WTC11 (cell line): ENCODE measurements at regions of chr14 and their contacts with region 1.

Region 1: DNA sequence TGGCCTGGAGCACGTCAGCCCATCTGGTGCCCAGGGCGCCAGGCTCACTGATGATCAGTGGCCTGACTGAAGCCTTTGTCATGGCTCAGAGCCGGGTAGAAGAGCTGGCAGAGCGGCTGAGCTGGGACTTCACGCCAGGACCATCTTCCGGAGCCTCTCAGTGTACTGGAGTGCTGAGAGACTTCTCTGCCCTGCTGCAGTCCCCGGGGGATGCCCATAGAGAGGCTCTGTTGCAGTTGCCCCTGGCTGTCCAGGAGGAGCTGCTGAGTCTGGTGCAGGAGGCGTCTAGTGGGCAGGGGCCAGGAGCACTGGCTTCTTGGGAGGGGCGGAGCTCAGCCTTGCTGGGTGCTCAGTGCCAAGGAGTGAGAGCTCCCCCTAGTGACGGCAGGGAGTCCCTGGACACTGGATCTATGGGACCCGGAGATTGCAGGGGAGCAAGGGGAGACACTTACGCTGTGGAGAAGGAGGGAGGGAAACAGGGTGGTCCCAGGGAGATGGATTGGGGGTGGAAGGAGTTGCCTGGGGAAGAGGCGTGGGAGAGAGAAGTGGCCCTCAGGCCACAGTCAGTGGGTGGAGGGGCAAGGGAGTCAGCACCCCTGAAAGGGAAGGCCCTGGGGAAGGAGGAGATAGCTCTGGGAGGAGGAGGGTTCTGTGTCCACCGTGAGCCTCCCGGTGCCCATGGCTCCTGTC is 2.0 kb downstream of the KHNYN start:
- DNase-seq: peak; percentile 96
- ATAC-seq: peak; percentile 84
- H3K4me3 Mint-ChIP-seq: peak overlapping the region; percentile 74
- H3K27ac Mint-ChIP-seq: peak overlapping the region; percentile 48
- H3K4me1 Mint-ChIP-seq: peaks cover 29% of the 10 kb centered on the region
- H3K27me3 Mint-ChIP-seq: peaks cover 14% of the 10 kb centered on the region
- CTCF ChIP-seq: peak; percentile 89

Region 2: GRCh38 chr14:24129410-24129998 is 302.2 kb before region 1 on chr14:
- CTCF ChIA-PET with region 1: no interaction called
- POLR2A ChIA-PET with region 1: no interaction called
- DNase-seq: no peak
- ATAC-seq: no peak
- H3K4me3 Mint-ChIP-seq: no peak overlapping the region
- H3K27ac Mint-ChIP-seq: no peak overlapping the region
- H3K4me1 Mint-ChIP-seq: peaks cover 4% of the 10 kb centered on the region
- H3K27me3 Mint-ChIP-seq: no peaks in the 10 kb centered on the region; the same call in 1 of the 2 replicates
- CTCF ChIP-seq: no peak

Region 3: DNA sequence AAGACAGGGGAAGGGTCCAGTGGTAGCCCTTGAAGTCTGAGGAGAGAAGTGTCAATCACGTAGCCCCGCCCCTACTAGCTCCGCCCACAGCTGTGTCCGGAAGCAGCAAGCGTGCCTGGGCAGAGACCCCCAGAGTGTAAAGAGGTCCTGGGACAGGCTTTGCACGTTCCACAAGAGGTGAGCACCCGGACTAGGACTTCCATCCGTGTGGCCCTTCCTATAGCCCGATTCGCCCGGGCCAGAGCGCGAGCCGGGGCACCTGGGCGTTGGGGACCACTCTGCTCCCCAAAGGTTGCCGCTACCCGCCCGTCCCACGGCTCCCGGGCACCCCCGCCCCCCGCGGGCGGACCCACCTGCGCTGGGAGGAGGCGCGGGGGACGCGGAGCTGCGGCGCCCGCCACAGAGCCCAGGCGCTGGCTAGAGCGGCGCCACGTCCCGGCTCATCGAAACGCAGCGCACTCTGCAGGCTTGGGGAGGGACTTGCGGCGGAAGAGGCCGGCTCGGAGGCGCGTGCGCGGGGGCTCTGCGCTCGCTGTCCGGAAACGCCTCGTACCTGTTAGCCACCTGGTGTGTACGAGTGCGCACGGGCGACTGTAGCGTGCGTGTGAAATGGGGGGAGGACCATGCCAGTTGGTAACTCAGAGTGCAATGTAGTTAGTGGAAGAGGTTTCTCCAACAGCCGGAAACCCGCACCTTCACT is 160.4 kb before region 1 on chr14 and contains the start of gene RABGGTA:
- CTCF ChIA-PET with region 1: interaction called, 10 read pairs
- POLR2A ChIA-PET with region 1: no interaction called
- DNase-seq: peak; percentile 95
- ATAC-seq: peak; percentile 94
- H3K4me3 Mint-ChIP-seq: peak within 1 kb of the TSS; percentile 72
- H3K27ac Mint-ChIP-seq: peak within 1 kb of the TSS; percentile 87
- H3K4me1 Mint-ChIP-seq: peaks cover 16% of the 10 kb centered on the region
- H3K27me3 Mint-ChIP-seq: no peaks in the 10 kb centered on the region
- CTCF ChIP-seq: 0 out of 2 replicates have a peak, but pooled peaks have one; percentile 15
- total RNA-seq, gene RABGGTA: 22.3 to 28.1 TPM (median 27.1 TPM) in 3 replicates

Region 4: DNA sequence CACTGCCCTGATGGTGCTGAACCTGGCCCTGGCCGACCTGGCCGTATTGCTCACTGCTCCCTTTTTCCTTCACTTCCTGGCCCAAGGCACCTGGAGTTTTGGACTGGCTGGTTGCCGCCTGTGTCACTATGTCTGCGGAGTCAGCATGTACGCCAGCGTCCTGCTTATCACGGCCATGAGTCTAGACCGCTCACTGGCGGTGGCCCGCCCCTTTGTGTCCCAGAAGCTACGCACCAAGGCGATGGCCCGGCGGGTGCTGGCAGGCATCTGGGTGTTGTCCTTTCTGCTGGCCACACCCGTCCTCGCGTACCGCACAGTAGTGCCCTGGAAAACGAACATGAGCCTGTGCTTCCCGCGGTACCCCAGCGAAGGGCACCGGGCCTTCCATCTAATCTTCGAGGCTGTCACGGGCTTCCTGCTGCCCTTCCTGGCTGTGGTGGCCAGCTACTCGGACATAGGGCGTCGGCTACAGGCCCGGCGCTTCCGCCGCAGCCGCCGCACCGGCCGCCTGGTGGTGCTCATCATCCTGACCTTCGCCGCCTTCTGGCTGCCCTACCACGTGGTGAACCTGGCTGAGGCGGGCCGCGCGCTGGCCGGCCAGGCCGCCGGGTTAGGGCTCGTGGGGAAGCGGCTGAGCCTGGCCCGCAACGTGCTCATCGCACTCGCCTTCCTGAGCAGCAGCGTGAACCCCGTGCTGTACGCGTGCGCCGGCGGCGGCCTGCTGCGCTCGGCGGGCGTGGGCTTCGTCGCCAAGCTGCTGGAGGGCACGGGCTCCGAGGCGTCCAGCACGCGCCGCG is 115.7 kb before region 1 on chr14:
- CTCF ChIA-PET with region 1: interaction called, 21 read pairs
- POLR2A ChIA-PET with region 1: interaction called, 3 read pairs
- DNase-seq: peak; percentile 63
- ATAC-seq: peak; percentile 74
- H3K4me3 Mint-ChIP-seq: no peak overlapping the region
- H3K27ac Mint-ChIP-seq: no peak overlapping the region
- H3K4me1 Mint-ChIP-seq: no peaks in the 10 kb centered on the region
- H3K27me3 Mint-ChIP-seq: peaks cover 87% of the 10 kb centered on the region
- CTCF ChIP-seq: no peak

Region 5: GRCh38 chr14:24332268-24332993 is 99.3 kb before region 1 on chr14:
- CTCF ChIA-PET with region 1: interaction called, 518 read pairs
- POLR2A ChIA-PET with region 1: interaction called, 12 read pairs
- DNase-seq: peak; percentile 82
- ATAC-seq: peak; percentile 72
- H3K4me3 Mint-ChIP-seq: peak overlapping the region; percentile 78
- H3K27ac Mint-ChIP-seq: no peak overlapping the region
- H3K4me1 Mint-ChIP-seq: peaks cover 24% of the 10 kb centered on the region
- H3K27me3 Mint-ChIP-seq: peaks cover 92% of the 10 kb centered on the region
- CTCF ChIP-seq: peak; percentile 68

Region 6: DNA sequence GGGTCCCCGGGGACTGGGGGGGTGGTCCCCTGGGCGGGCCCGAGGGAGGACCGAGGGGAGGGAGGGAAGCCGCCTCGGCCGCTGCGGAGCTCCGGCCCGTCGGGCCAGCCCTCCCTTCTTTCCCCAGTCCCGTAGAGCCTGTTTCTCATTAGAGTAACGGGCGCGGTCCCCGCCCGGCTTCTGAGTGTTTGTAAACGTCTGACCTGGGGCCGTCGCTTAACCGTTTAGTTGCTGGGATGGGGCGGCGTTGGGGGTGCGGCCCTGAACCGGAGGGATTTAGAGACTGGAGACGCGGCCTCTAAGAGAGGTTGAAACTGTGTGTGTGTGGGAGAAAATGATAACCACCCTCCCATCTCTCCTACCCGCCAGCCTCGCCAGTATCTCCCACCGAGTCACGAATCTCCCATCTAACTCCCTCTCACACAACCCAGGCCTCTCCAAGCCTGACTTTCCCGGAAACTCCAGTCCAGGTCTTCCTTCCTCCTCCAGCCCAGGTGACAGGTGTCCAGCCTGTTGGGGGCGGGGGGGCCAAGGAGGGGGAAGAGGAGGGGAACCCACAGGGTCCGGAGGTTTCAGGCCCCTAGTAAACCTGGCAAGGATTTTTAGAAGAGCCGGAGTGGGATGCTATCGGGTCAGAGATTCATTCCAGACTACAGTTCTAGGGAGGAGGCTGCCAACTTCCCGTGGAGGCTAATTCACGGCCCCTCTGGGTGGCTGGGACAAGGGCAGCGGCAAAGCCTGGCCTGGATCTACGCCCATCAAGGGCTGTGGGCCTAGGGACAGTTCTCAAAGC is 64.8 kb before region 1 on chr14:
- CTCF ChIA-PET with region 1: interaction called, 148 read pairs
- POLR2A ChIA-PET with region 1: interaction called, 23 read pairs
- DNase-seq: peak; percentile 93
- ATAC-seq: peak; percentile 60
- H3K4me3 Mint-ChIP-seq: peak overlapping the region; percentile 90
- H3K27ac Mint-ChIP-seq: peak overlapping the region; percentile 96
- H3K4me1 Mint-ChIP-seq: peaks cover 15% of the 10 kb centered on the region
- H3K27me3 Mint-ChIP-seq: peaks cover 18% of the 10 kb centered on the region
- CTCF ChIP-seq: no peak

Region 7: GRCh38 chr14:24411443-24412389 is 20.0 kb before region 1 on chr14:
- CTCF ChIA-PET with region 1: interaction called, 40 read pairs
- POLR2A ChIA-PET with region 1: interaction called, 3 read pairs
- DNase-seq: peak; percentile 56
- ATAC-seq: peak; percentile 81
- H3K4me3 Mint-ChIP-seq: no peak overlapping the region
- H3K27ac Mint-ChIP-seq: no peak overlapping the region
- H3K4me1 Mint-ChIP-seq: no peaks in the 10 kb centered on the region
- H3K27me3 Mint-ChIP-seq: no peaks in the 10 kb centered on the region
- CTCF ChIP-seq: peak; percentile 68